ENCODE measurements at regions of chr3 and their contacts with region 1.

Region 1: DNA sequence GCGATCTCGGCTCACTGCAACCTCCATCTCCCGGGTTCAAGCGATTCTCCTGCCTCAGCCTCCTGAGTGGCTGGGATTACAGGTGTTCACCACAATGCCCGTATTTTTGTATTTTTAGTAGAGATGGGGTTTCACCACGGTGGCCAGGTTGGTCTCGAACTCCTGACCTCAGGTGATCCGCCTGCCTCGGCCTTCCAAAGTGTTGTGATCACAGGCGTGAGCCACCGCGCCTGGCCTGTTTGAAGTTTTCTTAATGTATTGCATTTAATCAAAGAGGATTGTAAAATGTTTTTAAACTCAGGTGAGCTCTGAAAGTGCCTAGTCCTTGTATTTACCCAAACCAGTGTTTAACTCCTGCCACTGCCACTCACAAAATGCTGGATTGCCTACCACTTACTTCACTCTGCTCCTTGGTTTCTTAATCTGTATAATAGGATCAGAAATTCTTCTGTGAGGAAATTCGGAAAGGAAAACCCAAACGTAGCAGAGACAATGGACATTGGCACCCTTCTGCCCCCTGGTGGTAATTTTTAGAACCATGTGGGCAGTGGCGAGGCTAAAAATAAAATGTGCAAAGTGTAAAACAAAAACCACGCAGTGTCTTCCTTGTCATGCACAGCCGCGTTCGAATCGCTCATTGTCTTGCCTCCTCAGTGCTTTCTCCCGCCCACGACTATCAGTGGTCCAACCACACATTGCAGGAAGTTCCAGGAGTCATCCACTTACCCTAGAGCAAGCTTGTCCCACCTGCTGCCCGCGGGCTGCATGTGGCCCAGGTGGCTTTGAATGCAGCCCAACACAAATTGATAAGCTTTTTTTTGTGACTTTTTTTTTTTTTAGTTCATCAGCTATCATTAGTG is 27.3 kb downstream of the CEP19 start:
- DNase-seq: peak; percentile 50 to 65 (median 60)
- ATAC-seq: peak; percentile 73 to 83 (median 78)
- H3K4me3 ChIP-seq: peak overlapping the region in 3 of 12 donors; percentile 6 to 30 (median 7)
- H3K27ac ChIP-seq: peak overlapping the region in 1 of 12 donors; percentile 70
- H3K4me1 ChIP-seq: peaks cover 0 to 41% (median 5%) of the 10 kb centered on the region in 12 donors
- H3K27me3 ChIP-seq: no peaks in the 10 kb centered on the region
- CTCF ChIP-seq: peak; percentile 74 to 94 (median 88)
- POLR2A ChIP-seq: no peak

Region 2: GRCh38 chr3:196251918-196252317 is 432.9 kb before region 1 on chr3:
- intact Hi-C with region 1: loop called in 1 of 10 experiments (anchors 10 kb)
- DNase-seq: no peak
- ATAC-seq: peak in 1 of 4 donors; percentile 53
- H3K4me3 ChIP-seq: no peak overlapping the region
- H3K27ac ChIP-seq: no peak overlapping the region
- H3K4me1 ChIP-seq: no peaks in the 10 kb centered on the region
- H3K27me3 ChIP-seq: no peaks in the 10 kb centered on the region
- CTCF ChIP-seq: no peak
- POLR2A ChIP-seq: no peak

Region 3: GRCh38 chr3:196537319-196537984 is 147.3 kb before region 1 on chr3:
- intact Hi-C with region 1: loop called in 8 of 10 experiments (anchors 2 to 10 kb)
- DNase-seq: no peak
- ATAC-seq: no peak
- H3K4me3 ChIP-seq: no peak overlapping the region
- H3K27ac ChIP-seq: no peak overlapping the region
- H3K4me1 ChIP-seq: no peaks in the 10 kb centered on the region
- H3K27me3 ChIP-seq: peaks cover 0 to 4% (median 0%) of the 10 kb centered on the region in 9 donors
- CTCF ChIP-seq: peak; percentile 46 to 77 (median 55)
- POLR2A ChIP-seq: no peak

Region 4: DNA sequence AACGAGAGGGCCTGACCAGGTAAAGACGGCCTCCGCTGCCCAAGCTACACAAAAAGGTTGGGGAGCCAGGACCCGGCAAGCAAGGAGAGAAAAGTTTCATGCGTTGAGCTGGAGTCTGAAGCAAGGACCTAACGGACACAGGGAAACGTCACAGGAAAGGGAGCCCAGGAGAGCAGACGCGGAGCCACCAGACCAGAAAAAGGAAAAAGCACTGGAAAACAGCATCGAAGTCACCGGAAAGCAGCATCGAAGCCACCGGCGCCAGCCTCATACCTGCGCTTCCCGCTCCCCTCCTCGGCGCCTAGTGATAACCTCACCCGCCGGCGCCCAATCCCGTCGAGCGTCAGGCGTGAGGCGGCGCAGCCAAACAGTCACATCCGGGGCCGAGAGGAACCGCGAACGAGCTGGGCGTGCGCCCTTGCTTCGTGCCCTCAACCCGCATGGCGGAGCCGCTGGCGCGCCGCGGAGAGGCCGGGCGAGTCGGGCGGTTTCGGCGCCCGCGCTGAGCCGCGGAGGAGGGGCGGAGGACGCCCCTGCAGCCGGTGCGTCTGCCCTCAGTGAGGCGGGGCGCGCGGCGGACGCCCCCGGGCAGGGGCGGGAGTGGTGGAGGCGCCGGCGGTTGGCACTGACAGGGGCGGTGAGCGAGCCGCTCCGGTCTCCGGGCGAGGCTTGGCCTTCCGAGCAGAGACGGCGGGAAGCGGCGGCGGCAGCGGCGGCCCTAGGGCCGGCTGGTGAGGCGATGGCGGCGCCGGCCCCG is 116.4 kb before region 1 on chr3 and contains the starts of genes FBXO45 and WDR53:
- intact Hi-C with region 1: loop called in 1 of 10 experiments (anchors 1 kb)
- DNase-seq: peak; percentile 95 to 97 (median 96)
- ATAC-seq: peak; percentile 99 to 100 (median 99)
- H3K4me3 ChIP-seq: peak within 1 kb of the TSS; percentile 52 to 98 (median 80)
- H3K27ac ChIP-seq: peak within 1 kb of the TSS in 11 of 12 donors; percentile 68 to 93 (median 83)
- H3K4me1 ChIP-seq: peaks cover 0 to 45% (median 22%) of the 10 kb centered on the region in 12 donors
- H3K27me3 ChIP-seq: no peaks in the 10 kb centered on the region
- CTCF ChIP-seq: peak in 2 of 12 donors; percentile 7 to 15
- POLR2A ChIP-seq: peak in 1 of 2 donors; percentile 76
- total RNA-seq, gene FBXO45: 5.3 to 7.9 (median 6.6) TPM
- total RNA-seq, gene WDR53: 4.2 to 15.5 (median 8.4) TPM

Region 5: GRCh38 chr3:196609343-196609775 is 75.4 kb before region 1 on chr3:
- intact Hi-C with region 1: loop called (anchors 1 to 5 kb)
- DNase-seq: peak; percentile 86 to 95 (median 88)
- ATAC-seq: peak; percentile 77 to 95 (median 92)
- H3K4me3 ChIP-seq: peak overlapping the region in 1 of 12 donors; percentile 1
- H3K27ac ChIP-seq: peak overlapping the region in 7 of 12 donors; percentile 2 to 85 (median 44)
- H3K4me1 ChIP-seq: peaks cover 0 to 36% (median 18%) of the 10 kb centered on the region in 12 donors
- H3K27me3 ChIP-seq: peaks cover 0 to 2% (median 0%) of the 10 kb centered on the region in 9 donors
- CTCF ChIP-seq: peak; percentile 72 to 91 (median 82)
- POLR2A ChIP-seq: peak in 1 of 2 donors; percentile 13

Region 6: DNA sequence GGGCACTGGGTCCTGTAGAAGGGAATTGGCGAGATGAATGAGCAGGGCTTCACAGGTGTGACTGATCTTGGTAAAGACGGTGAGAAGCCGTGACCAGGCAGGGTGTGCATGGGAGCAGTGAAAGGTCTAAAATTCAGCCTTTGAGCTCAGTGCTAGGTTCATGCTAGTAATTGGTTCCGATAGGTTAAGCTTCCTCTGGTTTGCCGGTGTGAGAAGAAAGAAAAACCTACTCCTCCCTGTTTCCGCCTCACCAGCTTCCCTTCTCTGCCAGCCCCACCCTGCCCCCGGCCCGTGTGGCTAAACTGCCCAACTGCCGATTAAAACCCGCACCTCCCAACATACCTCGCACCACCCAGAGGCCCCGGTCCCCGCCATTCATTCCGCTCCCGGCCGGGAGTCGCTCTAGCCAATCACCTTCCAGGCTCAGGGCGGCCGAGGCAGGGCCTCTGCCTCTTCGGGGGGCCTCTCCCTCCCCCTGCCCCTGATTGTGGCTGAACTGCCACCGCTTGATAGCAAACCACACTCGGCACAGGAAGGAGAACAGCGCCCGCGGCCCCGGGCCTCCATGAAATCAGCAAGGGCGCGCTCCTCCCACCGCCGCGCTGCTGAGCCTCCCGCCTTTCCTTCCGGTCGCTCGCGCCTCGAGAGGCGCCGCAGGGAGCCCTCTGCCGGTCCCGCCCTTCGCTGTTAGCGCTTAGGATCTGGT is 52.6 kb before region 1 on chr3:
- intact Hi-C with region 1: loop called in 1 of 10 experiments (anchors 10 kb)
- DNase-seq: peak; percentile 86 to 94 (median 90)
- ATAC-seq: peak; percentile 72 to 95 (median 94)
- H3K4me3 ChIP-seq: peak overlapping the region; percentile 40 to 86 (median 64)
- H3K27ac ChIP-seq: peak overlapping the region; percentile 64 to 96 (median 85)
- H3K4me1 ChIP-seq: peaks cover 0 to 65% (median 14%) of the 10 kb centered on the region in 12 donors
- H3K27me3 ChIP-seq: no peaks in the 10 kb centered on the region
- CTCF ChIP-seq: peak in 10 of 12 donors; percentile 27 to 61 (median 36)
- POLR2A ChIP-seq: peak in 1 of 2 donors; percentile 22

Region 7: GRCh38 chr3:196639483-196640296 is 45.1 kb before region 1 on chr3 and contains the start of gene NRROS:
- intact Hi-C with region 1: loop called in 4 of 10 experiments (anchors 5 to 10 kb)
- DNase-seq: peak; percentile 72 to 85 (median 77)
- ATAC-seq: peak in 3 of 4 donors; percentile 85 to 89 (median 87)
- H3K4me3 ChIP-seq: peak within 1 kb of the TSS; percentile 30 to 89 (median 62)
- H3K27ac ChIP-seq: peak within 1 kb of the TSS; percentile 21 to 96 (median 75)
- H3K4me1 ChIP-seq: peaks cover 0 to 73% (median 8%) of the 10 kb centered on the region in 12 donors
- H3K27me3 ChIP-seq: peaks cover 0 to 29% (median 0%) of the 10 kb centered on the region in 9 donors
- CTCF ChIP-seq: peak in 1 of 12 donors; percentile 7
- POLR2A ChIP-seq: peak in 1 of 2 donors; percentile 41
- total RNA-seq, gene NRROS: 2.1 to 23.8 (median 3.4) TPM

Region 8: DNA sequence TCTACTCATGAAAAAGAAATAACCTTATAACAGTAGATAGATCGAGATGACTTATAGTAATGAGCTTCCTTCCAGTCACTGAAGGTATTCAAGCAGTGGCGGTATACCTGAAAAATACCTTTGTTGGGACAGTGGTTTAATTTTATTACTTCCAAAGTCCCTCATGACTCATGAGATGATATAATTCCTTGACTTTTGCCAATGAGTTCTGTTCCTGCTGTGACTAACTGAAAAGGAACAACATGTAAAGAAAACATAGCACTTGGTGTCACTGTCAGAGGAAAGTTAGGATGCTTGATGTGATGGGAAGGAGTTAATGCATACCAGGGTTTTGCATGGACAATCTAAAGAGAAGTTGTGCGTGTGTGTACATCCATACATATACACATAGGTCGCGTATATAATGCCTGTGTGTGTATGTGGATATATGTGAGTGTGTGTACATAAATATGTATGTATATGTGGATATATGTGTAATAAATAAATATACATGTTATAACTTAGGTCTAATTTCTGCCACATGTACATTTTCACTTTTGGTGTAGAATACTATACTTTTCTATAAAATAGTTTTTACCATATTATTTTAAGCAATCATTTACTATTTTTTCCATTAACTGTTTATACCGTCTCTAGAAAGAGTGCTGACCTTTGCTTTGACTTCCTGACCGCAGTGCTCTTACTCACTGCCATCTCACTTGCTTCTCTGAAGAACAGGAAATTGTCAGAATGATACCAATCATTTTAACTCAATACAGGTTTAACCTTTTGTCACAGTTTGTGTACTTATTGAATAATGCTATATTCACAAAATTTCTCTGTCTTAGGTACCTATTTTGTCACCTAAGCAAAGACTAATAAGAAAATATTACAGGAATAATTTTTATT is 42.3 kb after region 1 on chr3:
- intact Hi-C with region 1: no loop called
- DNase-seq: no peak
- ATAC-seq: no peak
- H3K4me3 ChIP-seq: no peak overlapping the region
- H3K27ac ChIP-seq: no peak overlapping the region
- H3K4me1 ChIP-seq: peaks cover 0 to 7% (median 0%) of the 10 kb centered on the region in 12 donors
- H3K27me3 ChIP-seq: no peaks in the 10 kb centered on the region
- CTCF ChIP-seq: no peak
- POLR2A ChIP-seq: no peak

Region 9: GRCh38 chr3:196914866-196915265 is 230.1 kb after region 1 on chr3:
- intact Hi-C with region 1: no loop called
- DNase-seq: no peak
- ATAC-seq: no peak
- H3K4me3 ChIP-seq: no peak overlapping the region
- H3K27ac ChIP-seq: no peak overlapping the region
- H3K4me1 ChIP-seq: no peaks in the 10 kb centered on the region
- H3K27me3 ChIP-seq: no peaks in the 10 kb centered on the region
- CTCF ChIP-seq: no peak
- POLR2A ChIP-seq: no peak

Region 10: GRCh38 chr3:197270558-197271317 is 586.0 kb after region 1 on chr3:
- intact Hi-C with region 1: no loop called
- DNase-seq: no peak
- ATAC-seq: no peak
- H3K4me3 ChIP-seq: no peak overlapping the region
- H3K27ac ChIP-seq: no peak overlapping the region
- H3K4me1 ChIP-seq: peaks cover 0 to 34% (median 13%) of the 10 kb centered on the region in 12 donors
- H3K27me3 ChIP-seq: no peaks in the 10 kb centered on the region
- CTCF ChIP-seq: no peak
- POLR2A ChIP-seq: no peak